Esophagus muscularis mucosa (tissue), 4 donors: ENCODE measurements at regions of chr1 and their contacts with region 1.

Region 1: DNA sequence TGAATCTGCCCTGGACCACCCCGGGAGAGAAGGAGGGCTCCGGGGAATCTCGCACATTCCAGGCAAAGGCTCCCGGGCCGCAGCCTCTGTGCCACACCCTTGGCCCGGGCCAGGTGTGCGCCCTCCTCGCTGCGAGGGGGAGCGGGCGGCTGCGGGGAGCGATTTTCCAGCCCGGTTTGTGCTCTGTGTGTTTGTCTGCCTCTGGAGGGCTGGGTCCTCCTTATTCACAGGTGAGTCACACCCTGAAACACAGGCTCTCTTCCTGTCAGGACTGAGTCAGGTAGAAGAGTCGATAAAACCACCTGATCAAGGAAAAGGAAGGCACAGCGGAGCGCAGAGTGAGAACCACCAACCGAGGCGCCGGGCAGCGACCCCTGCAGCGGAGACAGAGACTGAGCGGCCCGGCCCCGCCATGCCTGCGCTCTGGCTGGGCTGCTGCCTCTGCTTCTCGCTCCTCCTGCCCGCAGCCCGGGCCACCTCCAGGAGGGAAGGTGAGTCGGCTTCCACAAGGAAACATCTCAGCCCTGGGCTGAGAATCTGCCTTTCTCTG is at the start of gene LAMC2:
- DNase-seq: no peak
- H3K4me3 ChIP-seq: peak within 1 kb of the TSS; percentile 48 to 59 (median 55)
- H3K27ac ChIP-seq: peak within 1 kb of the TSS; percentile 72 to 86 (median 80)
- H3K4me1 ChIP-seq: peaks cover 5 to 30% (median 16%) of the 10 kb centered on the region in 4 donors
- H3K27me3 ChIP-seq: no peaks in the 10 kb centered on the region
- CTCF ChIP-seq: peak; percentile 44 to 55 (median 53)
- EP300 ChIP-seq: no peak
- POLR2A ChIP-seq: no peak
- total RNA-seq, gene LAMC2: 11.2 to 32.6 (median 14.9) TPM

Region 2: DNA sequence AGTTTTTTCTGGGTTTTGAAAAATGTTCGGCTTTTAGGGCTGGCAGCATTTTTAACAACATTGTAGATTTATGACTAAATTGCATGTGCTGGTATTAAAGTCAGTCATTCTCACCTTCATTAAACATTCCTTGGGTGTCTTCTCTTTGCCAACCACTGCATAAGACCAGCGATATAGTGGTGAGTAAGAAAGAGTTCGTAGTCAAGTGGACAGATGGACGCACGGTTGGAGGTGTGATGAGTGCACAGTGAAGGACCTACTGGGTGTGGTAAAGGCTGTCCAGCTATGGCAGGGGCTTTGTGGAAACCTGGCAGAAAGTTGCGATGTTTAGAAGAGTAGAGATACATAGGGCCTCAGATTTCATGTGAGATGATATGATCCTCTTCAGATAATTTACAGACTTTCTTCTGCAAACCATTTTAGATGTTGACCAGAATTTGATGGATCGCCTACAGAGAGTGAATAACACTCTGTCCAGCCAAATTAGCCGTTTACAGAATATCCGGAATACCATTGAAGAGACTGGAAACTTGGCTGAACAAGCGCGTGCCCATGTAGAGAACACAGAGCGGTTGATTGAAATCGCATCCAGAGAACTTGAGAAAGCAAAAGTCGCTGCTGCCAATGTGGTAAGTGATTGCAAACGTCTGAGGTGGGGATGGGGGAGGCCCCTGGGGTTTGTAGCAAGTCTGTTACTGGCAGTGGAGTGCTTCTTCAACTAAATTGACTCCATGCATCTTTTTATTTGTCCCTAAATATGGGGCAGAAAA is 55.9 kb before region 1 on chr1:
- intact Hi-C with region 1: no loop called
- DNase-seq: no peak
- H3K4me3 ChIP-seq: no peak overlapping the region
- H3K27ac ChIP-seq: peak overlapping the region; percentile 16 to 53 (median 41)
- H3K4me1 ChIP-seq: peaks cover 0 to 42% (median 26%) of the 10 kb centered on the region in 4 donors
- H3K27me3 ChIP-seq: no peaks in the 10 kb centered on the region
- CTCF ChIP-seq: no peak
- EP300 ChIP-seq: no peak
- POLR2A ChIP-seq: no peak

Region 3: GRCh38 chr1:183144752-183145151 is 41.3 kb before region 1 on chr1:
- intact Hi-C with region 1: loop called (anchors 5 kb)
- DNase-seq: no peak
- H3K4me3 ChIP-seq: no peak overlapping the region
- H3K27ac ChIP-seq: peak overlapping the region; percentile 78 to 81 (median 80)
- H3K4me1 ChIP-seq: peaks cover 15 to 71% (median 67%) of the 10 kb centered on the region in 4 donors
- H3K27me3 ChIP-seq: no peaks in the 10 kb centered on the region
- CTCF ChIP-seq: no peak
- EP300 ChIP-seq: no peak
- POLR2A ChIP-seq: no peak